ENCODE measurements at regions of chr20 and their contacts with region 1.

Region 1: GRCh38 chr20:32743237-32744112 is at the start of gene COMMD7:
- DNase-seq: peak; percentile 90
- ATAC-seq: peak; percentile 89
- H3K4me3 Mint-ChIP-seq: peak within 1 kb of the TSS; percentile 93
- H3K27ac Mint-ChIP-seq: peak within 1 kb of the TSS; percentile 97
- H3K4me1 Mint-ChIP-seq: peaks cover 31% of the 10 kb centered on the region
- H3K27me3 Mint-ChIP-seq: no peaks in the 10 kb centered on the region
- total RNA-seq, gene COMMD7: 35.9 to 38.8 TPM

Region 2: GRCh38 chr20:32517518-32517873 is 226.0 kb before region 1 on chr20:
- CTCF ChIA-PET with region 1: no interaction called
- POLR2A ChIA-PET with region 1: no interaction called
- intact Hi-C with region 1: no loop called
- DNase-seq: no peak
- ATAC-seq: no peak
- H3K4me3 Mint-ChIP-seq: no peak overlapping the region
- H3K27ac Mint-ChIP-seq: no peak overlapping the region
- H3K4me1 Mint-ChIP-seq: peaks cover 58% of the 10 kb centered on the region
- H3K27me3 Mint-ChIP-seq: no peaks in the 10 kb centered on the region

Region 3: DNA sequence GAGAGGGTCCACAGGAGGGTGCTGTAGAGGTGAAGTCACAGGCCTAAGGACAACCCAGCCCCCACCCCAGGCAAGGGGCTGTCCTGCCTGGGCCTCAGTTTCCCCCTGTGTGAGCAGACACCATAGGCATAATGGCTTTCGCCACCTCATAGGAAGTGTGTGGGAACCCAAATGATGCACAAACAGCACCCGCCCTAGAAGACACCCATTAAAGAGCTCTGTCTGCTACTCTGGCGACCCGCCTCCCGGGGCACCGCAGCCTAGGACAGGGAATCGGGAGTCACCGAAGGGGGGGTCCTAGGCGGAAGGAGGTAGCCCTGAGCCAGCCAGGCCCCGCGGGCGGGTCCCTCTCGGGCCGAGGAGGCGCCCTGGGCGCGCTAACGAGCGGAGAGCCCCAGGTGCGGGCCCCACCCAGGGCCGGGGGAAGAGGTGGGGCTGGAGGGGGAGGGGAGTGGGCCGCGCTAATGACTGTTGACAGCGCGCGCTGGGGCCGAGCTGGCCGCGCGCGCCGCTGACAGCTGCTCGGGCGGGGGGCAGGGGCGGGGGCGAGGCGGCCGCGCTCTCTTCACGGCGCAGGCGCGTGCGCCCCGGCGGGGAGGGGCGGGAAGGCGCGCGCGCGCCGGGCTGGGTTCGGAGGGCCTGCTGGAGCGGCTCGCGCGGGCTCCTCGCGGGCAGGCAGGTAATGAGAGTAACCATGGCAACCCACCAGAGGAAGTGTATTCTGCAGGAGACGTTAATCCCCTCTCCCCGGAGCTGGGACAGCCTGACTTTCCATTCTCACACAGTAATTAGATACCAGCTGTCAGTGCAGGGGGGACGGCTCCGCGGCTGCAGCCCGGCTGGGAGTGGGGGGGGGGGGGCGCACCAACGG is 207.3 kb before region 1 on chr20:
- CTCF ChIA-PET with region 1: no interaction called
- POLR2A ChIA-PET with region 1: no interaction called
- intact Hi-C with region 1: loop called in 1 of 2 experiments (anchors 5 kb)
- DNase-seq: peak; percentile 88
- ATAC-seq: peak; percentile 27
- H3K4me3 Mint-ChIP-seq: peak overlapping the region; percentile 72
- H3K27ac Mint-ChIP-seq: peak overlapping the region; percentile 95
- H3K4me1 Mint-ChIP-seq: peaks cover 82% of the 10 kb centered on the region
- H3K27me3 Mint-ChIP-seq: no peaks in the 10 kb centered on the region

Region 4: DNA sequence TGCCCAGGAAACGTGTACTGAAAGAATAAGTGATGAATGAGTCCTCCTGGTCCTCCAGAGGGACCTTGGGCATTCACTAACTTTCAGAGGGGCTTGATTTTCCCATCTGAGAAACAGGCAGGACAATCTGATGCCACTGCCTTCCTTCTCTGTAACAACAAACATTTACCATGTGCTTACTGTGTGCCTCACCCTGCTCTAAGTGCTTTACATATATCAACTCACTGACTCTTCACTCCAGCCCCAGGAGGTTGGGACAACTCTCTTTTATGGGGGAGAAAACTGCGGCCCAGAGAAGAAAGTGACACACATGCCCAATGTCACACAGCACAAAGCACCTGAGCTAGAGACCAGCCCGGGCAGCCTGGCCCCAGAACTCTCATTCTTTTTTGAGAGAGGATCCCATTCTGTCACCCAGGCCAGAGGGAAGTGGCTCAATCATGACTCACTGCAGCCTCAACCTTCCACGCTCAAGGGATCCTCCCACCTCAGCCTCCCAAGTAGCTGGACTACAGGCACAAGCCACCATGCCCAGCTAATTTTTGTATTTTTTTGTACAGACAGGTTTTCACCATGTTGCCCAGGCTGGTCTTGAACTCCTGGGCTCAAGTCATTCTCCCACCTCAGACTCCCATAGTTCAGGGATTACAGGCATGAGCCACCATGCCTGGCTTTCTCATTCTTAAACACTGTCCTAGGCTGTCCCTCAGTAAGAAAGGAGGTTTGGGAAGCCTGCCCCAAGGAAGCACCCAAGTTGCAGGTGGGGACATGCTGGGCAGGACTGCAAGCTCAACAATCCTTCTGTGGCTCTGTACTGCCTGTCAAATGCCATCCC is 196.3 kb before region 1 on chr20:
- CTCF ChIA-PET with region 1: no interaction called
- POLR2A ChIA-PET with region 1: no interaction called
- intact Hi-C with region 1: no loop called
- DNase-seq: no peak
- ATAC-seq: no peak
- H3K4me3 Mint-ChIP-seq: no peak overlapping the region
- H3K27ac Mint-ChIP-seq: peak overlapping the region; percentile 20
- H3K4me1 Mint-ChIP-seq: peaks cover 64% of the 10 kb centered on the region
- H3K27me3 Mint-ChIP-seq: no peaks in the 10 kb centered on the region

Region 5: DNA sequence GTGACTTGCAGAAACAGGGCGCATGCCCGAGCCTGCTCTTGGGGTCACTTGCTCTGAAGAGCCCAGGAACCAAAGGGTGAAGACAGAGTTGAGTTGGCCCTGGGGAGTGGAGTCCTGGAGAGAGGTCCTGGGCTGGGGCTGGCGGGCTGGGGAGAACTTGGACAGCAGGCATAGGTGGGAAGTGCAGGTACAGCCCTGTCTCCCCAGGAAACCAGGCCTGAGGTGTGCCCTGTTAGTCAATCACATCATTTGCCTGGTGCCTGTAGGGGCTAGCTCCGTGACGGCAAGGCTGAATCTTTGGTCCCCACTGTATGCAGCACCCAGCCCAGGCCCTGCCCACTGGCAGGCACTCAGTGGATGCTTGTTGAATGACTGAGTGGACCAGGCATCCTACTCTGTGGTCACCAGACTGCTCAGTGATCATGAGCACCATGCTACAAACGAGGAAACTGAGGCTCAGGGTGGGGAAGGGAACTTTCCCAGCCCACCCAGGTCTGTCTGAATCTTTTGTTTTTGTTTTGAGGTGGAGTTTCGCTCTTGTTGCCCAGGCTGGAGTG is 142.7 kb before region 1 on chr20:
- CTCF ChIA-PET with region 1: no interaction called
- POLR2A ChIA-PET with region 1: interaction called, 10 read pairs
- intact Hi-C with region 1: no loop called
- DNase-seq: no peak
- ATAC-seq: no peak
- H3K4me3 Mint-ChIP-seq: no peak overlapping the region
- H3K27ac Mint-ChIP-seq: no peak overlapping the region
- H3K4me1 Mint-ChIP-seq: no peaks in the 10 kb centered on the region
- H3K27me3 Mint-ChIP-seq: no peaks in the 10 kb centered on the region

Region 6: GRCh38 chr20:32702706-32703425 is 40.6 kb before region 1 on chr20:
- CTCF ChIA-PET with region 1: no interaction called
- POLR2A ChIA-PET with region 1: no interaction called
- intact Hi-C with region 1: no loop called
- DNase-seq: no peak
- ATAC-seq: no peak
- H3K4me3 Mint-ChIP-seq: no peak overlapping the region
- H3K27ac Mint-ChIP-seq: no peak overlapping the region
- H3K4me1 Mint-ChIP-seq: peaks cover 2% of the 10 kb centered on the region
- H3K27me3 Mint-ChIP-seq: no peaks in the 10 kb centered on the region

Region 7: DNA sequence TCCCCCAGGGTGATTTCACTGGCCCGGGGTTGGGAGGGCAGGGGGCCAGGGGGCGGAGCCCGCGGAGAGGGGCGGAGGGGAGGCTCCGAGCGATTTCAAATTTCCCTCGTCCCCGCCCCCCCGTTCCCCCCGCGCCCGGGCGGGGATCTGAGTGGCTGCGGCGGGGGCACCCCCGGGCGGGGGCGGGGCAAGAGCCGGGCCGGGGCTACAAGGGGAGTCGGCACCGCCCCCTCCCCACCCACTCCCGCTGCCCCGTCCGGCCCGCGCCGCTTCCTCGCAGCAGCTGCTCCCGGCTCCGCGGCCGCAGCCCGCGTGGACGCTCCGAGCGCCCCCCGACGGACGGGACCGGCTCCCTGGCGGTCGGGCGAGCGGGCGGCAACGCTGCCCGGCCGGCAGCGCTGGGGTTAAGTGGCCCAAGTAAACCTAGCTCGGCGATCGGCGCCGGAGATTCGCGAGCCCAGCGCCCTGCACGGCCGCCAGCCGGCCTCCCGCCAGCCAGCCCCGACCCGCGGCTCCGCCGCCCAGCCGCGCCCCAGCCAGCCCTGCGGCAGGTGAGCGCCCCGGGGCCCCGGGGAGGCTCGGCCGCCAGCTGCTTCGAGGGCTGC is 18.8 kb after region 1 on chr20 and contains the start of gene DNMT3B:
- CTCF ChIA-PET with region 1: interaction called, 4 read pairs
- POLR2A ChIA-PET with region 1: interaction called, 3 read pairs
- intact Hi-C with region 1: loop called in 1 of 2 experiments (anchors 1 kb)
- DNase-seq: peak; percentile 81
- ATAC-seq: peak; percentile 74
- H3K4me3 Mint-ChIP-seq: peak within 1 kb of the TSS; percentile 74
- H3K27ac Mint-ChIP-seq: peak within 1 kb of the TSS; percentile 22
- H3K4me1 Mint-ChIP-seq: peaks cover 10% of the 10 kb centered on the region
- H3K27me3 Mint-ChIP-seq: peaks cover 7% of the 10 kb centered on the region
- total RNA-seq, gene DNMT3B: 1.4 to 1.6 TPM

Region 8: DNA sequence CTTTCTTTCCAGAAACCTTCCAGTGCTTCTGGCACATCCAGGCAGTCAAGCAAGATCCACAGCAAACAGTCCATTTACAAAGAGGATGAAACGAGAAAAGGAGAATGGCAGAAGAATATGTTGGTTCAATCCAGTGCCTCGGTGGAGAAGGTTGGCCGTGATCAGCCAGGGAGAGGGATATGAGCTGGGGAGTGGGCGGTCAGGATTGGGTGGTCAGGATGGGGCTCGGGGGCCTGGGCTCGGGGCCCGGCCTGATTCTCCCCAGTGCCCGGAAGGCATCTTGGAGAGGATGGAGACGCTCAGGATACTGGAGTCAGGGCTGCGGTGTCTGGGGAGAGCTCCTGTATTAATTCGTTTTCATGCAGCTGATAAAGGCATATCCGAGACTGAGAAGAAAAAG is 176.6 kb after region 1 on chr20:
- CTCF ChIA-PET with region 1: no interaction called
- POLR2A ChIA-PET with region 1: no interaction called
- intact Hi-C with region 1: no loop called
- DNase-seq: no peak
- ATAC-seq: no peak
- H3K4me3 Mint-ChIP-seq: no peak overlapping the region
- H3K27ac Mint-ChIP-seq: no peak overlapping the region
- H3K4me1 Mint-ChIP-seq: no peaks in the 10 kb centered on the region
- H3K27me3 Mint-ChIP-seq: no peaks in the 10 kb centered on the region

Region 9: DNA sequence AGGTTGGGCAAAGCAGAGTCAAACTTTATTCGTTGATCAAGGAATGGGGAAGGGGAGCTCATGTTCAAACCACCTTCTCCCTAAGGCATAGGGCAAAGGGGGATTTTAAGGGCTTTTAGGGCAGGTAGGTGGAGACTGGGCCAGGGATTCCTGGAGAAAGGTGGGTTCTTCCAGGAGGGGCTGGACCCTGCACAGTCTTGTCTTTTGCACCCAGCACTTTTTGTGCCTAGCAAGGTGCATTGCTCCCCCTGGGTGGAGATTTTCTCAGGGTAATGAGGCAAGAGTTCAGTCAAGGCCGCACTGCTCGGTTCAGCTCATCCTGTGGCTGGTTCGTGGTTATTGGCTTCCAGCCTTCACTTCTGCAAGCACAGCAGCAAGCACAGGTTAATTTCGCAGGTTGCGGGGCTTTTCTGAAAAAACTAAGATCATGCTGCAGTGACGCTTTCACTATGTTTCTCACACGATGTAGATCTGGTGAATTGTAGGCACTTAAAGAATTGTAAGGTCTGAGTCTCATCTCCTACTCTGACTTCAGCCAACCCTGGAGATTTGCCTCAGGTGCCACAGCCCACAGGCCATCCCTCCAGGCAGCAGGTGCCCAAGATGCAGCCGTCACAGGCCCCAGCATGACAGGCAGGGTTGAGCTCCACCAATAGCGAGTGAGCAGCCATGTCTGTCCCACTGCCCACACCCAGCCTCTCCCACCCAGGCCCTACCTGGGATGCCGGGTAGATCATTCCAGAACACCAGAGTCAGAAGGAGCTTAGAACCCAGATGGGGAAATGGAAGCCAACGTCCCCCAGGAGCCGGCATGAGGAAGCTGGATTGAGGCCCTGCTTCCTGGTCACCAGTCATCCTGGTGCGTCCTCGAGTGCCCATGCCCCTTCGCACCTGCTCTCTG is 223.7 kb after region 1 on chr20:
- CTCF ChIA-PET with region 1: no interaction called
- POLR2A ChIA-PET with region 1: no interaction called
- intact Hi-C with region 1: loop called in 1 of 2 experiments (anchors 5 kb)
- DNase-seq: peak; percentile 79
- ATAC-seq: peak; percentile 29
- H3K4me3 Mint-ChIP-seq: peak overlapping the region; percentile 53
- H3K27ac Mint-ChIP-seq: no peak overlapping the region
- H3K4me1 Mint-ChIP-seq: peaks cover 14% of the 10 kb centered on the region
- H3K27me3 Mint-ChIP-seq: no peaks in the 10 kb centered on the region

Measured in activated CD4-positive, alpha-beta T cell treated with anti-CD3 and anti-CD28 coated beads for 36 hours (primary cell).